B cell (primary cell): ENCODE measurements at regions of chr6 and their contacts with region 1.

Region 1: DNA sequence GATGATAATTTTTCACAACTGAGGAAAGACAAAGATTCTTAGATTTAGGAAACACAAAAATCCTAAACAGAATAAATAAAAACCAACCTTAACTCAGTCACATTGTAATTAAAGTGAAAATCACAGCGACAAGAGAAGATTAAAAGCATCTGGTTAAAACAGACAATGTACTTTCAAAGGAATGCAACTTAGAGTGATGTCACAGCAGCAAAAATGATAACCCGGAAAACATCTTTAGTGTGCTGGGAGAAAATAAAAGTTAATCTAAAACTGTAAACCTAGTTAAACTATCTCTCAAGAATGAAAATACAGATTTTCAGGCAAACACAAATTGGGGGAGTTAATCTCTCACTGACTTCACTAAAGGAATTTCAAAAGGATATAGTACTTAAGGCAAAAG is 76.8 kb upstream of the OGFRL1 start:
- DNase-seq: no peak
- ATAC-seq: no peak
- H3K4me3 ChIP-seq: no peak overlapping the region
- H3K4me3 Mint-ChIP-seq: no peak overlapping the region
- H3K27ac ChIP-seq: no peak overlapping the region
- H3K27ac Mint-ChIP-seq: no peak overlapping the region
- H3K4me1 ChIP-seq: no peaks in the 10 kb centered on the region
- H3K4me1 Mint-ChIP-seq: no peaks in the 10 kb centered on the region
- H3K27me3 ChIP-seq: no peaks in the 10 kb centered on the region
- H3K27me3 Mint-ChIP-seq: no peaks in the 10 kb centered on the region
- CTCF ChIP-seq: no peak

Region 2: DNA sequence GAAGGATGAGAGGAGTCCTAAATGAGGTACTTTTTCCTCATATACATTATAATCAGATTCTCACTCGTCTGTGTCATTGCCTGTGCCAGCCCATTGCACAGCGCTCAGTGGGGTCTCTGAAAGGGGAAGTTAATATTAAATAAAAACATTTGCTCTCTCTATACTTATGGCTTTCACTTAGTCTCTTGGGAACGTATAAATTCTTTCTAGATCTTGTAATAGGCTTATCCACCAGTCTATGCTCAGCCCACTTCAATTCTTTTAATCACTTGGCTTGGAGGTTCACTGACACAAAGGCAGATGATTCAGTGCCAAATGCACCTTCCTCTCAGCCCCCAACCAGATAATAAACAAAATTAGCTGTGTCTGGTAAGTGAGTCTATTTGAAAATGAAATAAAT is 87.5 kb before region 1 on chr6:
- CTCF ChIA-PET with region 1: no interaction called
- POLR2A ChIA-PET with region 1: no interaction called
- intact Hi-C with region 1: no loop called
- DNase-seq: peak; percentile 15
- ATAC-seq: peak; percentile 77
- H3K4me3 ChIP-seq: no peak overlapping the region
- H3K4me3 Mint-ChIP-seq: no peak overlapping the region
- H3K27ac ChIP-seq: no peak overlapping the region
- H3K27ac Mint-ChIP-seq: no peak overlapping the region
- H3K4me1 ChIP-seq: peaks cover 4 to 6% of the 10 kb centered on the region in 2 donors
- H3K4me1 Mint-ChIP-seq: peaks cover 20% of the 10 kb centered on the region
- H3K27me3 ChIP-seq: no peaks in the 10 kb centered on the region
- H3K27me3 Mint-ChIP-seq: peaks cover 4% of the 10 kb centered on the region
- CTCF ChIP-seq: no peak

Region 3: DNA sequence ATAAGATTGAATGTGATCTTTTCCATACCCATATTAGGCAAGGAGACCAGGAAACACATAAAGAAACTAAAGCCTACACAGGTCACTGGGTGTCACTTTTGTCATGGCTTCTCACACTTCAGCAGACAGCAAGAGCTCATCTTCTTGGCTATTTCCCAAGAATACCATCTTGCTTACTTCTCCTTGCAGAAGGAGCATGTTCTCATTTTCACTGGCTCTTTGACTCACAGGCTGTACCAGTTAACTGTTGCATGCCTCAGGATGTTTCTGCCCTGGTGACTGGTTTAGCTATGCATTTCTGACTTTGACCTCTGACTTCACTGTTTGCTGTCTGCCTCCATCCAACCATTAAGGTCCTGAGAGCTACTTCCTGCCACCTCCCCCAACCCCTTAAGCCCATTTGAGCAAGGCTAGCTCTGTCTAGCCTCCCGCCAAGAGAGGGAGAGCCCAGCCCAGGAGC is 36.5 kb after region 1 on chr6:
- CTCF ChIA-PET with region 1: no interaction called
- POLR2A ChIA-PET with region 1: no interaction called
- intact Hi-C with region 1: loop called (anchors 5 kb)
- DNase-seq: peak; percentile 35
- ATAC-seq: peak; percentile 62
- H3K4me3 ChIP-seq: no peak overlapping the region
- H3K4me3 Mint-ChIP-seq: peak overlapping the region; percentile 17
- H3K27ac ChIP-seq: peak overlapping the region in 1 of 2 donors; percentile 50
- H3K27ac Mint-ChIP-seq: peak overlapping the region; percentile 59
- H3K4me1 ChIP-seq: peaks cover 26 to 50% of the 10 kb centered on the region in 2 donors
- H3K4me1 Mint-ChIP-seq: peaks cover 53% of the 10 kb centered on the region
- H3K27me3 ChIP-seq: no peaks in the 10 kb centered on the region
- H3K27me3 Mint-ChIP-seq: no peaks in the 10 kb centered on the region
- CTCF ChIP-seq: no peak

Region 4: DNA sequence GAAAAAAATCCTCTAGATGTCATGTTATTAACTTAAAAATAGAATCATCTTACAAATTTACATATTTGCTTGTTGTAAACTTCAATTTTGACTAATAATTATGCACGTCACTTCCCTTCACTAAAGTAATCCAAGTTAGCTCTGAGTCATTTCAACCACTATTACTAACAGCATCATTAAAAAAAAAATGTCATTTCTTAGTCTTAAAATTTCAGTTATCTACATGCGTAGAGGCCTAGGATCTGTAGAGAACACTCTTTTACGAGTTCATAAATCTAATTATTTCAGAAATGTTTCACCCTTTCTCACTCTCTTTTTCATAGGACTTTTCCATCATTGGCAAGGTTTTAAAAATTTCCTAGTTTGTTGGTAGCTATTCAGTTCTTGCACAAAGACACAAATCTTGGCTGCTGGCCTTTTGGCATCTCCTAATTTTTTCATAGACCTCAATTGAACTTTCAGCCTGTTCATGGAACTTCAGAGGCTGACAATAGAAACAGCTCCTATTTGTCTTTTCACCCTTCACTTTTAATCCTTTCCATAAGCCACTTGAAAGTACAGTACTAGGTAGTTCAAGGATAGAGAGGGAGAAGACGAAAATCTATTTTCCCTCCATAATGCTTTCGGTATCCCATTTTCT is 138.3 kb after region 1 on chr6:
- CTCF ChIA-PET with region 1: no interaction called
- POLR2A ChIA-PET with region 1: no interaction called
- intact Hi-C with region 1: no loop called
- DNase-seq: no peak
- ATAC-seq: no peak
- H3K4me3 ChIP-seq: no peak overlapping the region
- H3K4me3 Mint-ChIP-seq: no peak overlapping the region
- H3K27ac ChIP-seq: no peak overlapping the region
- H3K27ac Mint-ChIP-seq: no peak overlapping the region
- H3K4me1 ChIP-seq: peaks cover 5 to 9% of the 10 kb centered on the region in 2 donors
- H3K4me1 Mint-ChIP-seq: peaks cover 10% of the 10 kb centered on the region
- H3K27me3 ChIP-seq: no peaks in the 10 kb centered on the region
- H3K27me3 Mint-ChIP-seq: no peaks in the 10 kb centered on the region
- CTCF ChIP-seq: no peak